A549 (cell line): ENCODE measurements at regions of chr5 and their contacts with region 1.

Region 1: GRCh38 chr5:43484106-43484849 is 613 bp upstream of the TMEM267 start:
- DNase-seq: peak; percentile 85 to 90
- ATAC-seq: peak; percentile 88 to 92
- H3K4me3 ChIP-seq: peak overlapping the region; percentile 63
- H3K27ac ChIP-seq: peak overlapping the region; percentile 91 to 96
- H3K4me1 ChIP-seq: peaks cover 26% of the 10 kb centered on the region
- CTCF ChIP-seq: peak; percentile 74
- EP300 ChIP-seq: no peak
- POLR2A ChIP-seq: no peak
- RAD21 ChIP-seq: peak; percentile 63 to 79

Region 2: GRCh38 chr5:43140286-43140685 is 344.0 kb before region 1 on chr5:
- CTCF ChIA-PET with region 1: no interaction called
- POLR2A ChIA-PET with region 1: interaction called, 12 read pairs
- DNase-seq: no peak
- ATAC-seq: no peak
- H3K4me3 ChIP-seq: no peak overlapping the region
- H3K27ac ChIP-seq: no peak overlapping the region
- H3K4me1 ChIP-seq: no peaks in the 10 kb centered on the region
- CTCF ChIP-seq: no peak
- EP300 ChIP-seq: no peak
- POLR2A ChIP-seq: no peak
- RAD21 ChIP-seq: no peak

Region 3: GRCh38 chr5:43227655-43228054 is 256.6 kb before region 1 on chr5:
- CTCF ChIA-PET with region 1: interaction called, 10 read pairs
- POLR2A ChIA-PET with region 1: no interaction called
- DNase-seq: peak; percentile 60 to 71
- ATAC-seq: peak; percentile 73
- H3K4me3 ChIP-seq: no peak overlapping the region
- H3K27ac ChIP-seq: no peak overlapping the region
- H3K4me1 ChIP-seq: no peaks in the 10 kb centered on the region
- CTCF ChIP-seq: peak; percentile 70
- EP300 ChIP-seq: no peak
- POLR2A ChIP-seq: no peak
- RAD21 ChIP-seq: peak; percentile 72 to 77

Region 4: DNA sequence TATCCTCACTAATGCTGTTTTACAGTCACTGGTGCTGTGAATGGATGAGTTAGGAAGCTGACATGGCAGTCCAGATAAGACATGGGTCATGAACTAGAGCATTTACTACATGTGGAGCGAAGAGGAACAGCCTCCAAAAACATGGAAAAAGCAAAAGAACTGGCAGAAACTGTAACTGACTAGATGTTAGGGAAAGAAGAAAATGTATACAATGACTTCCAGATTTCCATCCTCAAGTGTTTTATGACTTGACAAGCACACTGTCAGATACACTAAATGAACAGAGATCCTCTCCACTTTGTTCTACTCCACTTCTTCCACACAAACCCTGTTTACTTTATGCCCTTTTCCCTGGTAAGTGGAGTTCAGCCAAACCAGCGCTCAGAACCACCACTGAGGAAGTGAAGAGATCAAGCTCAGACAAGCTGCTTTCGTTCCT is 182.6 kb before region 1 on chr5:
- CTCF ChIA-PET with region 1: no interaction called
- POLR2A ChIA-PET with region 1: no interaction called
- DNase-seq: no peak
- ATAC-seq: no peak
- H3K4me3 ChIP-seq: no peak overlapping the region
- H3K27ac ChIP-seq: no peak overlapping the region
- H3K4me1 ChIP-seq: 0 out of 3 replicates have a peak, but pooled peaks cover 6% of the 10 kb centered on the region
- CTCF ChIP-seq: no peak
- EP300 ChIP-seq: no peak
- POLR2A ChIP-seq: no peak
- RAD21 ChIP-seq: no peak

Region 5: GRCh38 chr5:43389679-43390329 is 94.5 kb before region 1 on chr5:
- CTCF ChIA-PET with region 1: interaction called, 18 read pairs
- POLR2A ChIA-PET with region 1: interaction called, 11 read pairs
- DNase-seq: peak; percentile 79 to 91
- ATAC-seq: peak; percentile 95 to 96
- H3K4me3 ChIP-seq: no peak overlapping the region
- H3K27ac ChIP-seq: peak overlapping the region in 1 of 2 experiments; percentile 13; a peak in 1 of 6 replicates
- H3K4me1 ChIP-seq: peaks cover 8% of the 10 kb centered on the region; the same call in 1 of the 3 replicates
- CTCF ChIP-seq: peak; percentile 98
- EP300 ChIP-seq: no peak
- POLR2A ChIP-seq: no peak
- RAD21 ChIP-seq: peak; percentile 90 to 94

Region 6: GRCh38 chr5:43409809-43410271 is 74.4 kb before region 1 on chr5:
- CTCF ChIA-PET with region 1: interaction called, 9 read pairs
- POLR2A ChIA-PET with region 1: interaction called, 21 read pairs
- DNase-seq: no peak
- ATAC-seq: no peak
- H3K4me3 ChIP-seq: no peak overlapping the region
- H3K27ac ChIP-seq: no peak overlapping the region
- H3K4me1 ChIP-seq: no peaks in the 10 kb centered on the region
- CTCF ChIP-seq: no peak
- EP300 ChIP-seq: no peak
- POLR2A ChIP-seq: no peak
- RAD21 ChIP-seq: no peak

Region 7: DNA sequence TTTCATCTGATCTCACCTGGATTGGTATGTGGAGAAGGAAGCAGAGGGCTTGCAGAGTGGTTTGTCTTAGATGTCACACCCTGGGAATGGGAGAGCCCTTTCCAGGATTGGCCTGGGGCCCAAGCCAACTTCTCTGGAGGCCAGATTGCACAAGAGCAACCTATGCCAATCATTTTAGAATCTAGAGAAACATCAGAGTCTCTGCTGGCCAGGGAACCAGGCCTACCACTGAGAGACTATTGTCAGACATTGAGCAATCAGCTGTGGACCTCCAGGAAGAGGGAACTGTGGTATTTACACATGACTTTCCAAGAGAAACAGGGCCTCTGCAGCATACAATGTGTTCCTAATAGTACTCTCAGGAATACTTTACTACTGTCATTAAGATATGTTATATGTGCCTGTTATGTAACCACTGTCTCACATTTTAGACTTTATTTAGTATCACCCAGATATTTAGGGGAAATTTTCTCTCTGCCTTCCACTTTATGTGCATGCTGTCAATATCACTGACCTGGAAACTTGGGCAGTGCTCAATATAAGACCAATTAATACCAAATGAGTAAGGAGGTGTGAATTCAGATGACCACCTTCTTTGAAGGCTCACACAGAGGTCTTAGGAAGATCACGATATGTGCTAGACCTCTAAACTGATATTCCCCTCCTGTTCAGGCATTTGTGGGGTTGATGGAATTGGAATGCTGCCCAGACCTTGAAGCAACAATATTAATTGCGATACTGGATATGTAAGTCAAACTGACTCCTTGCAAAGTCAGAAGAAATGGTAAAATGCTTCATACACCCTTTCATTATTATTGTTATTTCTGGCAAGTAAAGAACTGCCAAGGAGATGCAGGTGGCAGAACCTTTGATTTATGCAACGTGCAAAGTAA is 51.6 kb before region 1 on chr5:
- CTCF ChIA-PET with region 1: interaction called, 20 read pairs
- POLR2A ChIA-PET with region 1: interaction called, 17 read pairs
- DNase-seq: peak; percentile 49 to 92
- ATAC-seq: peak; percentile 85
- H3K4me3 ChIP-seq: no peak overlapping the region
- H3K27ac ChIP-seq: peak overlapping the region; percentile 88
- H3K4me1 ChIP-seq: peaks cover 54% of the 10 kb centered on the region
- CTCF ChIP-seq: no peak
- EP300 ChIP-seq: peak; percentile 91 to 93; a peak in 4 of 5 replicates
- POLR2A ChIP-seq: no peak
- RAD21 ChIP-seq: peak in 1 of 2 experiments; percentile 49; a peak in 3 of 5 replicates

Region 8: GRCh38 chr5:43514816-43515677 is 30.8 kb after region 1 on chr5 and contains the start of gene C5orf34:
- CTCF ChIA-PET with region 1: interaction called, 5 read pairs
- POLR2A ChIA-PET with region 1: interaction called, 41 read pairs
- DNase-seq: peak; percentile 96 to 98
- ATAC-seq: peak; percentile 100
- H3K4me3 ChIP-seq: peak within 1 kb of the TSS; percentile 72
- H3K27ac ChIP-seq: peak within 1 kb of the TSS; percentile 84 to 88
- H3K4me1 ChIP-seq: peaks cover 10% of the 10 kb centered on the region; the same call in 2 of the 3 replicates
- CTCF ChIP-seq: no peak
- EP300 ChIP-seq: no peak
- POLR2A ChIP-seq: peak; percentile 78
- RAD21 ChIP-seq: peak in 1 of 2 experiments; percentile 23; a peak in 1 of 5 replicates
- polyA plus RNA-seq, gene C5orf34: 11.8 and 16.1 TPM in 2 replicates

Region 9: DNA sequence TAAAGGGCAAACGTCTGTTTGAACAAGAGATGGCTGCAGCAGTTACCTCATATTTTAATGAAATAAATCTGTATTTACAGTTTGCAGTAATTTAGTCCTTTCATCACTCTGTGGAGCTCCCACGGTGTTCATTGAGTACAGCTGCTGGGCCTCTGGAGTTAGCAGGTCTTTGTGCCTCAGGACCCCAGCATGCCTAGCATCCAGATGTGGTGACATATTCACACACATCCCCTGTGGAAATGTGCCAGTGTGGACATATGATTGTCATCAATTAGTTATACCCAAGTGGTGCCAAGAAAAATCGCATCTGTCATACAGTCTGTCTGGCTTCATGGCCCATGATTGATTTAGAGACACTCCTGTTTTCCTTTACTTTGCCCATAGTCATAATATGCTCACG is 196.0 kb after region 1 on chr5:
- CTCF ChIA-PET with region 1: no interaction called
- POLR2A ChIA-PET with region 1: no interaction called
- DNase-seq: no peak
- ATAC-seq: no peak
- H3K4me3 ChIP-seq: no peak overlapping the region
- H3K27ac ChIP-seq: no peak overlapping the region
- H3K4me1 ChIP-seq: no peaks in the 10 kb centered on the region
- CTCF ChIP-seq: no peak
- EP300 ChIP-seq: no peak
- POLR2A ChIP-seq: no peak
- RAD21 ChIP-seq: no peak

Region 10: DNA sequence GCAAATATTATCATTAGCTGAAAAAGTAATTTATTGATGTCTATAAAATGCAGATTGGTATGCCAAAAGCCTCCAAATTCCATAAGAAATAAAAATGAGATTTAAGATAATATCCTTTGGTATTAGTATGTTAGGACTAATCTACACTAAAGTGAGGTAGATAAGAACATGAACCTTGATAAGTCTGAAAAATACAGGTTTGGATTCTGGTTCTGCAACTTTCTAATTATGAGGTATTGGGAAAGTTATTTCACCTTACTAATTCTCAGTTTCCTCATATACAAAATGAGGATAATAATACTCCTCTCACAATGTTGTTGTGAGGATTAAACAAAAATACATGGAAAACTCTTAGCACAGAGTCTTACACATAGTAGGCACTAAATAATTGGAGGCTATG is 418.9 kb after region 1 on chr5:
- CTCF ChIA-PET with region 1: no interaction called
- POLR2A ChIA-PET with region 1: no interaction called
- DNase-seq: no peak
- ATAC-seq: no peak
- H3K4me3 ChIP-seq: no peak overlapping the region
- H3K27ac ChIP-seq: no peak overlapping the region
- H3K4me1 ChIP-seq: no peaks in the 10 kb centered on the region
- CTCF ChIP-seq: no peak
- EP300 ChIP-seq: no peak
- POLR2A ChIP-seq: no peak
- RAD21 ChIP-seq: no peak